Ascending aorta (tissue), 2 donors: ENCODE measurements at regions of chr14 and their contacts with region 1.

Region 1: GRCh38 chr14:89178802-89179535 is 238.1 kb downstream of the FOXN3 start:
- DNase-seq: no peak
- H3K4me3 ChIP-seq: no peak overlapping the region
- H3K27ac ChIP-seq: peak overlapping the region; percentile 70 to 76
- H3K4me1 ChIP-seq: peaks cover 5 to 40% of the 10 kb centered on the region in 2 donors
- H3K27me3 ChIP-seq: no peaks in the 10 kb centered on the region
- CTCF ChIP-seq: no peak

Region 2: GRCh38 chr14:89214221-89214936 is 35.4 kb after region 1 on chr14:
- intact Hi-C with region 1: loop called (anchors 5 kb)
- DNase-seq: peak; percentile 57 to 89
- H3K4me3 ChIP-seq: peak overlapping the region in 1 of 2 donors; percentile 38
- H3K27ac ChIP-seq: peak overlapping the region; percentile 56 to 73
- H3K4me1 ChIP-seq: peaks cover 4 to 40% of the 10 kb centered on the region in 2 donors
- H3K27me3 ChIP-seq: no peaks in the 10 kb centered on the region
- CTCF ChIP-seq: peak in 2 of 3 experiments; percentile 12 to 37